ENCODE measurements at regions of chr5 and their contacts with region 1.

Region 1: GRCh38 chr5:74919487-74919886 is 53.3 kb upstream of the FAM169A start:
- DNase-seq: no peak
- H3K4me3 ChIP-seq: no peak overlapping the region
- H3K27me3 ChIP-seq: 0 out of 2 replicates have a peak, but pooled peaks cover 1% of the 10 kb centered on the region
- CTCF ChIP-seq: peak; percentile 57

Region 2: GRCh38 chr5:74673011-74673790 is 246.3 kb before region 1 on chr5:
- CTCF ChIA-PET with region 1: interaction called, 48 read pairs
- POLR2A ChIA-PET with region 1: no interaction called
- DNase-seq: no peak
- H3K4me3 ChIP-seq: no peak overlapping the region
- H3K27me3 ChIP-seq: peaks cover 3% of the 10 kb centered on the region; the same call in 1 of the 2 replicates
- CTCF ChIP-seq: peak; percentile 45

Region 3: GRCh38 chr5:74877624-74878304 is 41.7 kb before region 1 on chr5:
- CTCF ChIA-PET with region 1: no interaction called
- POLR2A ChIA-PET with region 1: no interaction called
- DNase-seq: no peak
- H3K4me3 ChIP-seq: no peak overlapping the region
- H3K27me3 ChIP-seq: peaks cover 2% of the 10 kb centered on the region; the same call in 1 of the 2 replicates
- CTCF ChIP-seq: no peak